ENCODE measurements at regions of chr10 and their contacts with region 1.

Region 1: DNA sequence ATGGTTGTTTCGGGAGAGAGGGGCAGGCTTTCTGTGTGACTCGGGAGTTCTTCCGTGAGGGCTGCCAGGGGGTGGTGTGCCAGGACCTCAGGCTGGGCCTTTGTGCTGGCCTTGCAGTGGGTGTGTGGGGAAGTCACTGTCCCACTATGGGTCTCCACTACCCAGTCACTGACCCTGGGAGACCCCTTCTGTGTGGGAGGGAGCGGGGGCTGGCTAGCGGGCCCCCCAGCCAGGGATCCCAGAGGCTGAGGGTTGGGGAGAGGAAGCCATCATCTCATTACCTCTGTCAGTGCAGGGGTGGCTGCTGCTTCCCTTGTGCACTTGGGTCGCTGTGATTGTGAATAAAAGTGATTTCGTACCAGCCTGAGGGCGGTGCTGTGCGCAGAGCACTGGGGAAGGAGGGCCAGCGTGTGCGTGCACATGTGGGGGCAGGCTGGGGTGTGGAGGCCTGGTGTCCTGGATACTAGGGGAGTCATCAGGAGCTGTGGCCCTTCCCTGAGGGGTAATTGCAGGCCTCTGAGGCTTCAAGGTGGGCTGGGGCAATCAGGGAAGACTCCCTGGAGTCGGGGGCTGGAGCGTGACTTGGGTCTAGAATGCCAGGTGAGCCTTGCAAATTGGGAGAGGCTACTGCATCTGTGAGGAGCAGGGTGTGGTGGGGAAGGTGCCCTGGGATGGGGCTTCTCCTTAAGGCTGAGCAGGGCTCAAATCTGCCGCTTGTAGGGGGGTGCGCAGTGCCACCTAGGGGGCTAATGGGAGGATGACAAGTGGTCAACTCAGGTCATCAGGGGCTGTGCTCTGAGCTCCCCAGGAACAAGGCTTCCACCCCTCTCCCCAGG is 98.9 kb downstream of the NEURL1 start:
- DNase-seq: peak; percentile 73
- ATAC-seq: peak; percentile 91
- H3K4me3 Mint-ChIP-seq: no peak overlapping the region
- H3K27ac Mint-ChIP-seq: no peak overlapping the region
- H3K4me1 Mint-ChIP-seq: no peaks in the 10 kb centered on the region
- H3K27me3 Mint-ChIP-seq: no peaks in the 10 kb centered on the region
- CTCF ChIP-seq: peak; percentile 66

Region 2: DNA sequence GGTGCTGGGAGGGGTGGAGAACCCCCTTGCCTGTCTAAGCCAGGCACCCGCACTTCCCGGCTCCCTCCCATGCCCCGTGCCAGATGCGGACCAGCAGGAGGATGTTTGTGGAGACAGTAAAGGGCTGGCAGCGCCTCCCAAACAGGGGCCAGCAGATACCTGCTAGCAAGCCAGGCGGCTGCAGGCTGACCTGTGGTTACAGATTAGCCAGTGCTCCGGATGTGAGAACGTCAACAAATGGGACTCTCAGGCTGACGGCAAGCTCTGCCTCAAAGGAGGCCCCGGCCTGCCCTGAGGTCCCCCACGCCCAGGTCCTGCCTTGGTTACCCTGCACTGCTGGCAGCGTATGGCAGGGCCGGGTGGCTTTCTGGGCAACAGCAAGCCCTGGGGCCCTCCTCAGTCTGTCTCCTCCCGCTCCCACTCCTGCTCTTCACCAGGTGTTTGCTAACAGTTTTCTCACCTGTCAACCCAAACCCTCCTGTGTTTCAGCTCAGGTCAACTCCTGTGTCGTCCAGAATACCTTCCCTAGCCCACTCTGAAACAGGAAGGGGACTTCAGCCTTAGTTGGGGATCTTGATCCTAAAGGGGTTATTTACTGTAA is 13.5 kb before region 1 on chr10:
- CTCF ChIA-PET with region 1: interaction called, 11 read pairs
- POLR2A ChIA-PET with region 1: interaction called, 3 read pairs
- intact Hi-C with region 1: no loop called
- DNase-seq: no peak
- ATAC-seq: no peak
- H3K4me3 Mint-ChIP-seq: no peak overlapping the region
- H3K27ac Mint-ChIP-seq: no peak overlapping the region
- H3K4me1 Mint-ChIP-seq: peaks cover 2% of the 10 kb centered on the region
- H3K27me3 Mint-ChIP-seq: peaks cover under 1% of the 10 kb centered on the region
- CTCF ChIP-seq: no peak